ENCODE measurements at regions of chr15 and their contacts with region 1.

Region 1: GRCh38 chr15:78909791-78910228 is 35.0 kb downstream of the CTSH start:
- DNase-seq: peak; percentile 42
- ATAC-seq: peak; percentile 54
- H3K4me3 Mint-ChIP-seq: no peak overlapping the region
- H3K27ac Mint-ChIP-seq: peak overlapping the region; percentile 17
- H3K4me1 Mint-ChIP-seq: peaks cover 39% of the 10 kb centered on the region
- H3K27me3 Mint-ChIP-seq: no peaks in the 10 kb centered on the region

Region 2: DNA sequence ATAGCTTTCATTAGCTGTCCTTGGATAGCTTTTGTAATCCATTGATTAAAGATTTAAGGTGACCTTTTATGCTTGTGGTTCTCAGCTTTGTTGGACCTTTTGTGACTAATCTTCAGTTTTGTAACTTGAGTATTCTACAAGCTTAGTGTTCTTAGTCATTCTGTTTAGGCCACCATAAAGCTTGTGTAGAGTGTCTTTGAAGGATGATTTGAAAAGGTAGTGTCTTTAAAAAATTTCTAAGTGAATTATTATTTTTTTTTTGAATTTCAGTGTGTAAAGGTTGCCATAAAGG is 29.6 kb before region 1 on chr15:
- CTCF ChIA-PET with region 1: interaction called, 17 read pairs
- POLR2A ChIA-PET with region 1: no interaction called
- DNase-seq: no peak
- ATAC-seq: no peak
- H3K4me3 Mint-ChIP-seq: no peak overlapping the region
- H3K27ac Mint-ChIP-seq: no peak overlapping the region
- H3K4me1 Mint-ChIP-seq: peaks cover 59% of the 10 kb centered on the region
- H3K27me3 Mint-ChIP-seq: no peaks in the 10 kb centered on the region

Region 3: DNA sequence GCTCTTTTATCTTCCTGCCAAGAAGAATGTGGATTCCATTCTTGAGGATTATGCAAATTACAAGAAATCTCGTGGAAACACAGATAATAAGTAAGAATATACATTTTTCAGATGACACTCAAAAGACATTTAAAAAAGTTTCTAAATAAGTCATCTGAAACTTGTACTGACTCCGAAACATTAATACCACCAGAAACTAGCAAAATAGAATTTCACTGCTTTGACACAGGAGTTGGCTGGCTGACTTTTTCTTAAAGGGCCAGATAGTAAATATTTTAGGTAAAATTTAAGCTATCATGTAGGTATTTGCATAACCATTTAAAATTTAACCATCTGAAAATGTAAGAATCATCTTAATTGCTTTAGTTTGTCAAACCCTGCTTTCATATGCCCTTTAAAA is 16.3 kb before region 1 on chr15:
- CTCF ChIA-PET with region 1: interaction called, 29 read pairs
- POLR2A ChIA-PET with region 1: interaction called, 3 read pairs
- DNase-seq: no peak
- ATAC-seq: no peak
- H3K4me3 Mint-ChIP-seq: no peak overlapping the region
- H3K27ac Mint-ChIP-seq: no peak overlapping the region
- H3K4me1 Mint-ChIP-seq: peaks cover 2% of the 10 kb centered on the region
- H3K27me3 Mint-ChIP-seq: no peaks in the 10 kb centered on the region

Region 4: DNA sequence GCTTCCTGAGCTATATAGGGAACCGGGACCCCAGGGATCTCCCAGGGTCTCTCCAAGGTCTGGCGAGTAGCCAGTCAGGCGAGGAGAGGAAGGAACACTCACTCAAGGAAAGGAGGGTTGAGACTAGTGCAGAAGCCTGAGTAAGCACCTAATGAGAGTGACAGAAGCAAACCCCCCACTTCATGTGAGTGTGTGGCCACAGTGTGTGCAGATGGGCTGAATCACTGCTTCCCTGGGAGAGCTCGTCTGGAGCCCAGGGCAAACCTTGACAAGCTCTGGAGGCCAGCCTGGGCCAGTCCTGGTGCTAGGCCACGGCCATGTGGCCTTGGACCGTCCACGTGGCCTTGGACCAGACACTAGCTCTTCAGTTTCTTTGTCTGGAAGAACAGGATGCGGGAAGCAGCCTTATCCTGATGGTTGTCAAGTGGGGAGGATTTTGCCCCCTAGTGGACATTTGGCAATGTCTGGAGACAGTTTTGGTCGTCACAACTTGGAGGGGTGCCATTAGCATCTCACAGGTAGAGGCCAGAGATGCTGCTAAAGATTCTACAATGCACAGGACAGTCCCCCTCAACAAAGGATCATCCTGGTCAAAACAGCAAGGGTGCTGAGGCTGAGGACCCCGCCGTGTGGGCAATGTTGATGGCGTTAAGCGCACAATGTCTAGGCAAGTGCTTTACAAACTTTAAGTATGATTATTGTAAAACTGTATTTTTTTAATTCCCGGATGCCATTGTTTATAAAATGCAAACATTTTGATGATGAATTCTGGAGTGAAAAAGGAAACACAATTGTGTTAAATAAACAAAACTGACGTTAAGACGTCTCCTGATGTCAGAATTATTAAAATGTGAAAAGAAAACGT is 69.9 kb after region 1 on chr15:
- CTCF ChIA-PET with region 1: interaction called, 45 read pairs
- POLR2A ChIA-PET with region 1: no interaction called
- DNase-seq: peak; percentile 53
- ATAC-seq: peak; percentile 60
- H3K4me3 Mint-ChIP-seq: no peak overlapping the region
- H3K27ac Mint-ChIP-seq: no peak overlapping the region
- H3K4me1 Mint-ChIP-seq: peaks cover 8% of the 10 kb centered on the region
- H3K27me3 Mint-ChIP-seq: peaks cover 7% of the 10 kb centered on the region

Region 5: GRCh38 chr15:79184465-79184892 is 274.7 kb after region 1 on chr15:
- CTCF ChIA-PET with region 1: interaction called, 14 read pairs
- POLR2A ChIA-PET with region 1: no interaction called
- DNase-seq: peak; percentile 75
- ATAC-seq: no peak
- H3K4me3 Mint-ChIP-seq: no peak overlapping the region
- H3K27ac Mint-ChIP-seq: no peak overlapping the region
- H3K4me1 Mint-ChIP-seq: no peaks in the 10 kb centered on the region
- H3K27me3 Mint-ChIP-seq: no peaks in the 10 kb centered on the region

Measured in activated CD8-positive, alpha-beta T cell treated with anti-CD3 and anti-CD28 coated beads, Interleukin-2, amount 10 ng/mL, durations not matched to agents 7 days and 5 days (primary cell).